Mammary epithelial cell (primary cell): ENCODE measurements at regions of chr7 and their contacts with region 1.

Region 1: DNA sequence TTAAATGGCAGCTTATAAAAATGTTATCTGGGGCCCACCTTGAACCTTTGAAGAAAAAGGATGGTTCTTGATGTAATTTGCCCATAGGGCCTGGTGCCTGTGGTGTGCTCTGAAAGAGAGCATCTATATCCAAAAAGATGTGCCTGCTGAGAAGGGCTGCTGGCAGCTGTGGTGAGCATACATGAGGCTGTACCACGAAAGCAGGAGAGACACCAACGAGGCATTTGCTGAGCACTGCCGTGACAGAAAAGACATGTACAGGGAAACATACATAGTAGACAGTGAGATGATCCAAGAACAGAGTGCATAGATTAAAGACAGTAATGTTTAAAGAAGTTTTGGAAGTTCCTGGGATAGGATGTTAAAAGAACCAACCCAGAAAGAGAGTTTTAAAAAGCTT is 664.5 kb downstream of the PHTF2 start:
- DNase-seq: no peak
- H3K4me3 ChIP-seq: no peak overlapping the region
- H3K27ac ChIP-seq: no peak overlapping the region
- H3K4me1 ChIP-seq: no peaks in the 10 kb centered on the region
- H3K27me3 ChIP-seq: no peaks in the 10 kb centered on the region
- CTCF ChIP-seq: no peak

Region 2: DNA sequence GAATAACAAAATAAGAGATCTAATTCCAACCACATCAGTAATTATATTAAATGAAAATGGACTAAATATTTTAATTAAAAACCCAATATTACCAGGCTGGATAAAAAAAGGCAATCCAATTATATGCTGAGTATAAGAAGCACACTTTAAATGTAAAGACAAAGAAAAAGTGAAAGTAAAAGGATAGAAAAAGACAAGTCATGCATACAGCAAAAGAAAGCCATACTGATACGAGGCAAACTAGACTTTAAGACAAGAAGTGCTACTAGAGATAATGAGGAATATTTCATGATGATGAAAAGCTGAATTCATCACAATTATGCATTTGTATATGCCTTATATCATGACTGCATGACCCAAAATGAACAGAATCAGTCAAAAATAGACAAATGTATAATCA is 35.8 kb before region 1 on chr7:
- CTCF ChIA-PET with region 1: no interaction called
- dilution Hi-C with region 1: loop called (anchors 5 kb)
- in situ Hi-C with region 1: no loop called
- intact Hi-C with region 1: no loop called
- DNase-seq: no peak
- H3K4me3 ChIP-seq: no peak overlapping the region
- H3K27ac ChIP-seq: no peak overlapping the region
- H3K4me1 ChIP-seq: no peaks in the 10 kb centered on the region
- H3K27me3 ChIP-seq: peaks cover 2% of the 10 kb centered on the region
- CTCF ChIP-seq: no peak